ENCODE measurements at regions of chr9 and their contacts with region 1.

Region 1: DNA sequence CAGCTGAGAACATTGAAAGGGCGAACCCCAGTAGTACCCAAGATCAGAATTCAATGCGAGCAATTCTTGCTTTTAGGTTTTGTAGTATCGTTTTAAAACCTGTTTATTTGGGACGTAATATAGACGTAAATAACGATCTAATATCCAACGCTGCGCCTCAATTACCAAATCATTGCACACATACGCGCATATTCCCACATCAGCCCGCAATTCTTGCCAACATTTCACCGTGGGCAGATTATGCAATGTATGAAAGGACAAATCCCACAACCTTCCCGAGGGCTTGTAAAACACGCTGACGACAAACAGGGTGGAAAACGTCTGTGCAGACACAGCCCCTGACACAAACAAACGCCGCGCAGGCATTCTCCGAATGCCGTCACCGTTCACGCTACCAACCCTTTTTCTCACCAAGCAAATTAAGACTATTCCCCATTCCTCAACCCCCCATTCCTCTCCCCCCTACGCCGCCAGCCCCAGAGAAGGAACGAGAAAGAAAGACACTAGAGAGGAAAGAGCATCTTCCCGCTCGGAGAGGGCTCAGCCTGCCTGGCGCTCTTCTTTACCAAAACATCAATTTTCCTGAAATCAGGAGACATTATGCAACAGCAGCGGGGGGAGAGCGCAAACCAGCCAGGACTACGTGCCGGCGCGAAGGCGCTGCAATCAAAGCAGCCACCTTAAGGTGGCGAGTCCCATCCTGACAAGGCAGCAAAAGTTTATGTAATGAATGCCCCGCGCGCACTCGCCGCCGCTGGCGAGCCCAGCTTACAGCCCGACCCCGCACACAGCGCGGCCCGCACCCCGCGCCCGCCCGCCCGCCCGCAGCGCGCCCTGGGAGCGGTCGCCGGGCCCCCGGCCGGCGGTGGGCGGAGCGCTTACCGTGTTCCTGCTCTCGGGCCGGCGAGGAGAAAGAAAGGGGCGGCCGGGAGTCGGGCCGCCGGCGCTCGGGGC is 597 bp downstream of the NFIL3 start:
- DNase-seq: peak; percentile 71
- H3K4me3 Mint-ChIP-seq: peak overlapping the region; percentile 98
- H3K27ac Mint-ChIP-seq: peak overlapping the region; percentile 93
- H3K4me1 Mint-ChIP-seq: peaks cover 62% of the 10 kb centered on the region
- H3K27me3 Mint-ChIP-seq: peaks cover 4% of the 10 kb centered on the region

Region 2: GRCh38 chr9:91047993-91048607 is 374.9 kb before region 1 on chr9:
- CTCF ChIA-PET with region 1: interaction called, 4 read pairs
- POLR2A ChIA-PET with region 1: no interaction called
- intact Hi-C with region 1: loop called (anchors 1 kb)
- DNase-seq: peak; percentile 73
- H3K4me3 Mint-ChIP-seq: no peak overlapping the region
- H3K27ac Mint-ChIP-seq: peak overlapping the region; percentile 83
- H3K4me1 Mint-ChIP-seq: peaks cover 58% of the 10 kb centered on the region
- H3K27me3 Mint-ChIP-seq: peaks cover 40% of the 10 kb centered on the region

Region 3: DNA sequence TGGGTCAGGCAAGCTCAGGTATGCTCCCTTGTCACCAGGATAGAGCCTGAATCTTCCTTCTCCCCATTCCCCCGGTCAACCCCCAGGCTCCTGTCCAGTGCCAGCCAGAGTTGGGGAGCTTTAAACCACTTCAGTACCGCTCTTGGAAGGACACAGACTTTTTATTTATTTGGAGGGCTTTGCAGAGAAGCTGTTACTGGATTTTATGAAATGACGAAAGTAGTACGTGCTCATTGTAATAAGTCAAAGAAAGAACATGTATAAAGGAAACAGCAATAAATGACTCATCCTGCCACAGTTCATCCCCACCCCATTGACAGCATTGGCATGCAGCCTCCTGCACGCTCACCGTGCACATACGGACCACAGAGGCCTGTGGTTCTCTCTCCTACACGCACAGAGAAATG is 291.6 kb before region 1 on chr9:
- CTCF ChIA-PET with region 1: no interaction called
- POLR2A ChIA-PET with region 1: interaction called, 12 read pairs
- intact Hi-C with region 1: no loop called
- DNase-seq: peak; percentile 92
- H3K4me3 Mint-ChIP-seq: peak overlapping the region; percentile 32
- H3K27ac Mint-ChIP-seq: peak overlapping the region; percentile 90
- H3K4me1 Mint-ChIP-seq: peaks cover 26% of the 10 kb centered on the region
- H3K27me3 Mint-ChIP-seq: peaks cover 4% of the 10 kb centered on the region

Region 4: DNA sequence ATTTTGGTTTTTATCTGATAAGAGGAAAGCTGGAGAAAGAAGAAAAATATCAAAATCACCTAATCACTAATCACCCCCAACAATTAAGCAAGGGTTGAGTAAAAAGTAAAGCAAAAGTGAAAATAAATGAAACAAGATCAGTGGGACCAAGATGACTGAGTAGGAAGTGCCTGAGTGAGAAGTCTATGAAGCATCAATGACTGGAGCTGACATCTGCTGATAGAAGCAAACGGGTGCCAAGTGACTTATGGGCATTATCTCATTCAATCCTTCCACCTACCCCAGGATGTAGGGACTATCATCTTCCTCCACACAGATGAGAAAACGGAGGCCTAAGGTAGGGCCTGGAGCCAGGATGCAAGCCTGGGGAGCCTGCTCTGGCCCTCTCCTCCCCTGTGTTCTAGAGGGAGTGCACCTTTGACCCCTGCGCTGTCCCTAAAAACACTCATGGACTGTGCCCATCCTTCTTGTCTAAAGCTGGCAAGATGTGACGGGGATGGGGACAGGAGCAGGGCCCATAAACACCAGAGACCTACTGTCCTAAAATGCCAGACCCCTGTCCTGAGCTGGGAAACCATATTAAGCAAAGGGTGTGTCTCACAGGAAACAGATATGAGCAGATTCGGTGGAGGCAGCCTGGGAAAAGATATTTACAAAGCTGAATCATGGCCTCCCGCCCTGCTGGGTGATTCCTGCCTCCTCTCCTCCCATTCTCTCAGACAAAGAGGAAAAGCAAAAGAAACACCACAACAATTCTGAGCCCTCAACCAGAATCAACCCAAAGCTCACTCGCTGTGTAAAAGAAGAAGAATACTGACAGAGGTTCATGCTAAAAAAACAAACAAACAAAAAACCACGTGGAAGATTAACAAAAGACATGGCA is 177.4 kb before region 1 on chr9:
- CTCF ChIA-PET with region 1: no interaction called
- POLR2A ChIA-PET with region 1: no interaction called
- intact Hi-C with region 1: loop called (anchors 2 kb)
- DNase-seq: peak; percentile 41
- H3K4me3 Mint-ChIP-seq: no peak overlapping the region
- H3K27ac Mint-ChIP-seq: peak overlapping the region; percentile 89
- H3K4me1 Mint-ChIP-seq: peaks cover 28% of the 10 kb centered on the region
- H3K27me3 Mint-ChIP-seq: no peaks in the 10 kb centered on the region

Region 5: GRCh38 chr9:91361291-91362050 is 61.6 kb before region 1 on chr9 and contains the start of gene AUH:
- CTCF ChIA-PET with region 1: interaction called, 9 read pairs
- POLR2A ChIA-PET with region 1: interaction called, 83 read pairs
- intact Hi-C with region 1: loop called (anchors 1 kb)
- DNase-seq: peak; percentile 91
- H3K4me3 Mint-ChIP-seq: peak within 1 kb of the TSS; percentile 96
- H3K27ac Mint-ChIP-seq: peak within 1 kb of the TSS; percentile 95
- H3K4me1 Mint-ChIP-seq: peaks cover 50% of the 10 kb centered on the region
- H3K27me3 Mint-ChIP-seq: no peaks in the 10 kb centered on the region
- total RNA-seq, gene AUH: 38.8 to 40.9 TPM

Measured in activated CD4-positive, alpha-beta memory T cell treated with anti-CD3 and anti-CD28 coated beads for 36 hours (primary cell).